H1 (cell line): ENCODE measurements at regions of chr3 and their contacts with region 1.

Region 1: DNA sequence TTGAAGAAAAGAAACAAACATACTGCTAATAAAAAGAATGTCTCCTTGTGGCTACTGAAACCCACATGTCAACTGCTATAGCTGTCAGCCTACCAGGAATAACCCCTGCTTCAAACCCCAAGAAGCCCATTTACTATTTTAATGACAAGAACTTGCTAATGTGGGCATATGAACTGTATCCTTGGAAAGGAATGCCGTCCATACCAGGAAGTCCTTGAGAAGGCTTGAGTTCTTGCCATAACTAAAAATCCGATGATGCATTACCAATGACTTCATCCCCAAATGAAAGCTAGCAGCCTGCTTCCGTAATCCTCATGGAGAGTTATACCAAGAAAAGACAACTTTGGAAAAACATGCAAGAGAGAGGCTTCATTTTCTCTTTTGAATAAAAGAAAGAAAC is 34.8 kb downstream of the MINDY4B start:
- DNase-seq: no peak
- H3K4me3 ChIP-seq: no peak overlapping the region
- H3K27ac ChIP-seq: no peak overlapping the region
- H3K4me1 ChIP-seq: no peaks in the 10 kb centered on the region
- H3K27me3 ChIP-seq: no peaks in the 10 kb centered on the region
- CTCF ChIP-seq: no peak
- EP300 ChIP-seq: no peak
- POLR2A ChIP-seq: no peak
- RAD21 ChIP-seq: no peak

Region 2: GRCh38 chr3:150721285-150722130 is 148.9 kb before region 1 on chr3:
- CTCF ChIA-PET with region 1: interaction called, 20 read pairs
- POLR2A ChIA-PET with region 1: no interaction called
- DNase-seq: no peak
- H3K4me3 ChIP-seq: no peak overlapping the region
- H3K27ac ChIP-seq: no peak overlapping the region
- H3K4me1 ChIP-seq: no peaks in the 10 kb centered on the region
- H3K27me3 ChIP-seq: no peaks in the 10 kb centered on the region
- CTCF ChIP-seq: peak in 2 of 3 experiments; percentile 51 to 69; a peak in 2 of 4 replicates
- EP300 ChIP-seq: no peak
- POLR2A ChIP-seq: no peak
- RAD21 ChIP-seq: peak; percentile 88 to 92

Region 3: GRCh38 chr3:150763122-150763841 is 107.1 kb before region 1 on chr3 and contains the start of gene SIAH2:
- CTCF ChIA-PET with region 1: interaction called, 11 read pairs
- POLR2A ChIA-PET with region 1: no interaction called
- DNase-seq: peak in 1 of 2 experiments; percentile 81
- H3K4me3 ChIP-seq: peak within 1 kb of the TSS; percentile 64 to 79 (median 76)
- H3K27ac ChIP-seq: no peak within 1 kb of the TSS
- H3K4me1 ChIP-seq: peaks cover 5 to 12% (median 10%) of the 10 kb centered on the region in 4 experiments; a peak in 5 of 7 replicates
- H3K27me3 ChIP-seq: peaks cover 0 to 7% (median 3%) of the 10 kb centered on the region in 4 experiments; a peak in 4 of 7 replicates
- CTCF ChIP-seq: 0 out of 4 replicates have a peak, but pooled peaks of 1 of the 3 experiments have one; percentile 11
- EP300 ChIP-seq: peak in 1 of 2 experiments; percentile 44; a peak in 1 of 3 replicates
- POLR2A ChIP-seq: no peak
- RAD21 ChIP-seq: no peak
- total RNA-seq, gene SIAH2: 21.8 and 23.9 TPM in 2 replicates

Region 4: GRCh38 chr3:150798122-150798626 is 72.2 kb before region 1 on chr3:
- CTCF ChIA-PET with region 1: interaction called, 11 read pairs
- POLR2A ChIA-PET with region 1: no interaction called
- DNase-seq: no peak
- H3K4me3 ChIP-seq: peak overlapping the region in 1 of 4 experiments; percentile 9; a peak in 1 of 8 replicates
- H3K27ac ChIP-seq: no peak overlapping the region; the same call in 1 of the 2 replicates
- H3K4me1 ChIP-seq: peaks cover 0 to 5% (median 0%) of the 10 kb centered on the region in 4 experiments; a peak in 1 of 7 replicates
- H3K27me3 ChIP-seq: no peaks in the 10 kb centered on the region
- CTCF ChIP-seq: no peak
- EP300 ChIP-seq: no peak
- POLR2A ChIP-seq: no peak
- RAD21 ChIP-seq: no peak

Region 5: DNA sequence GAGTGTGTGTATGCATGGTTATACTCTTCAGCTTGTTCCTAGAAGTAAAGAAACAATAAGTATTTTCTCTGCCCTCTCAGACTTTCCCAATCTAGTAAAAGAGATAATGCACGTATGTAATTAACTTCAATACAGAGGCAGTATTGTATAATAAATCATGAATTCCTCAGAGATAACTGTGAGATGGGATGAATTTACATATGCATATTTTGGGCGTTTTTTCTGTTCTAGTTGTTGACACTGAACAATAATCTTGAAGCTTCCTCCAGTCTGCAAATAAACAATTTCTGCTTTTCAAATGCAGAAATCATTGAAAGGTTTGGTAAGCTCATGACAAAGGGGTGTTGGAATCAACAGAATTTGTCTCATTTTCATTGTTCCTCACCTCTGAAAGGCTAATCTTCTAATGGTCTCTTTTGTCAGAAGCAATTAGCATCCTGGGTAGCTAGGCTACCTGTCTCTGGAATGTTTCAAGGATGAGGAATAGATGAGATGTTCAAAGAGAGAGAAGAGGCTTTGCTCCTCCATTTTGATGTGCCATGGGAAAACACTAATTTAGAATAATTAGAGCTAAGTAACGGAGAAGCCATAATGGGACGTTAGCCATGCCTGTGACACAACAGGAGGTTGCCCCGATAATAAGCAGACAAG is 64.1 kb before region 1 on chr3:
- CTCF ChIA-PET with region 1: interaction called, 10 read pairs
- POLR2A ChIA-PET with region 1: no interaction called
- DNase-seq: peak in 1 of 2 experiments; percentile 50
- H3K4me3 ChIP-seq: peak overlapping the region in 1 of 4 experiments; percentile 26; a peak in 1 of 8 replicates
- H3K27ac ChIP-seq: no peak overlapping the region
- H3K4me1 ChIP-seq: peaks cover 0 to 17% (median 10%) of the 10 kb centered on the region in 4 experiments; a peak in 4 of 7 replicates
- H3K27me3 ChIP-seq: no peaks in the 10 kb centered on the region; a peak in 1 of 7 replicates
- CTCF ChIP-seq: no peak
- EP300 ChIP-seq: peak in 1 of 2 experiments; percentile 87; a peak in 1 of 3 replicates
- POLR2A ChIP-seq: no peak
- RAD21 ChIP-seq: no peak

Region 6: DNA sequence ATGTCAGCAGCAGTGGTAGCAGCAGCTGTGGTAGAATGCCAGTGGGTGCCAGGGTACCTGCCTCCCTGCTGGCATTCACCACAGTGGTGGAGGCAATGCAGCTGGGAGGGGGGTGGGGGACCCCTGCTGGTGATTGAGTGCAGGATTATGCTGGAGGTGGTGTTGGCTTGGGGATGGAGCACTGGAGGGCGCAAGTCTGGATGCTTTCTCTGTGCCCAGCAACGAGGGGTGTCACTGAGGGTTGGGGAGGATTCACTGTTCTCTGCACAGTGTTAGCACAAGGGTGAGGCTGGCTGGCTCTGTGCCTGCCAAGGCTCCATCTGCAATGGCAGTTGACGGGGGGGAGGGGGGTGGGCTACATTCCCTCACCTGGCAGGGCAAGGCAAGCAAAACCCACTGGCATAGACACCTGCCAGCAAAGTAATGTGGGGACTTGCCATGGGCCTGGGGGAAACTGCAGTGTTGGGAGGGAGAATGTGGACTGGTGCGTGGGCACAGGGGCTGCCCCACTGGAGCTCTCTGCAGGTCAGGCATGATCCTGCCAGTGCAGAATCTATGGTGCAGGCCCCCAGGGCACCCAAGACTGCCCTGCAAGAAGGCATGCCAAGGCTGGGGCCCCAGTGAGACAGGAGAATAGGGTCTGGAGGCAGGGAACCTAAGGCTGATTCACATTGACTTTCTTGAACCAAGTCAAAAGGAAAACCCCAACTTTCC is 29.4 kb before region 1 on chr3:
- CTCF ChIA-PET with region 1: interaction called, 11 read pairs
- POLR2A ChIA-PET with region 1: no interaction called
- DNase-seq: no peak
- H3K4me3 ChIP-seq: no peak overlapping the region
- H3K27ac ChIP-seq: no peak overlapping the region
- H3K4me1 ChIP-seq: peaks cover 0 to 3% (median 1%) of the 10 kb centered on the region in 4 experiments; a peak in 2 of 7 replicates
- H3K27me3 ChIP-seq: peaks cover 5 to 17% (median 14%) of the 10 kb centered on the region in 4 experiments; a peak in 6 of 7 replicates
- CTCF ChIP-seq: peak; percentile 21 to 58 (median 37)
- EP300 ChIP-seq: no peak
- POLR2A ChIP-seq: no peak
- RAD21 ChIP-seq: peak; percentile 23 to 41; a peak in 3 of 4 replicates

Region 7: GRCh38 chr3:150850191-150850590 is 20.2 kb before region 1 on chr3:
- CTCF ChIA-PET with region 1: interaction called, 41 read pairs
- POLR2A ChIA-PET with region 1: no interaction called
- DNase-seq: no peak
- H3K4me3 ChIP-seq: no peak overlapping the region
- H3K27ac ChIP-seq: no peak overlapping the region
- H3K4me1 ChIP-seq: peaks cover 0 to 6% (median under 1%) of the 10 kb centered on the region in 4 experiments; a peak in 3 of 7 replicates
- H3K27me3 ChIP-seq: no peaks in the 10 kb centered on the region
- CTCF ChIP-seq: no peak
- EP300 ChIP-seq: no peak
- POLR2A ChIP-seq: no peak
- RAD21 ChIP-seq: no peak

Region 8: GRCh38 chr3:151197981-151198767 is 327.8 kb after region 1 on chr3:
- CTCF ChIA-PET with region 1: no interaction called
- POLR2A ChIA-PET with region 1: no interaction called
- DNase-seq: no peak
- H3K4me3 ChIP-seq: no peak overlapping the region
- H3K27ac ChIP-seq: no peak overlapping the region
- H3K4me1 ChIP-seq: no peaks in the 10 kb centered on the region
- H3K27me3 ChIP-seq: no peaks in the 10 kb centered on the region
- CTCF ChIP-seq: no peak
- EP300 ChIP-seq: no peak
- POLR2A ChIP-seq: no peak
- RAD21 ChIP-seq: no peak